Activated B cell treated with CpG ODN at 0.5 μM for 24 hours (primary cell): ENCODE measurements at regions of chr1 and their contacts with region 1.

Region 1: DNA sequence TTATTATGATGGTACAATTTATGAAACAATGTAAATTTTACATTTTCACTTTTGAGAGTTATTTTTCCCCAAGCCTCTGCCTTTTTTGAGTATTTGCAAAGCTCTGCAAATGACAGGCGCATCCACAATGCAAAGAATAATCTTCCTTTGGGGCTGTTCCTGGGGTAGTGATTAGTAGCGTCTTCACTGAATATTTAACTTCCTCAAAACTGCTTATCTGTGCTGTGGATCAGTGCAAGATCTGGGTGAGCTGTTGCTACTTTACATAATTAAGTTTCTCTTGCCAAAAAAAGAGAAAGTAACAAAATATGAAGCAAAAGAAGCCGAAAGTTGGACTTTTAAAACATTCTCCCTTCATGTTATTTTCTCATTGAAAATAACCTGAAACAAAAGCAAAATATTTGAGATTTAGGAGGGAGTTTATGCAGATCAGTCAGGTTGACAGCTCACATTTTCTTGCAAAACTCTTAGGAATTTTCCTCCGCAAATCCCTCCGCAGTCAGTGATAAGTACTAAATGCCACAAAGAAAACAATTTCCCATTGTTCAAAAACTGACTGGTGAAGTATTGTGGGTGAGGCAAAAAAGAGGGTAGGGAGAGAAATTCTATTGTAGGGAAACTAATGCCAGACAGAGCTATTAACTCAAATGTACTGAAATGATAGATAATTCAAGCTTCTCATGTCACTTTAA is 276.4 kb upstream of the B3GALT2 start:
- DNase-seq: no peak
- ATAC-seq: peak; percentile 78
- H3K4me3 Mint-ChIP-seq: peak overlapping the region; percentile 46
- H3K27ac Mint-ChIP-seq: no peak overlapping the region
- H3K4me1 Mint-ChIP-seq: peaks cover 12% of the 10 kb centered on the region
- H3K27me3 Mint-ChIP-seq: no peaks in the 10 kb centered on the region
- CTCF ChIP-seq: no peak

Region 2: GRCh38 chr1:193479187-193479586 is 16.4 kb after region 1 on chr1:
- CTCF ChIA-PET with region 1: no interaction called
- POLR2A ChIA-PET with region 1: no interaction called
- intact Hi-C with region 1: loop called (anchors 1 kb)
- DNase-seq: peak; percentile 19
- ATAC-seq: peak; percentile 91
- H3K4me3 Mint-ChIP-seq: peak overlapping the region; percentile 35
- H3K27ac Mint-ChIP-seq: peak overlapping the region; percentile 81
- H3K4me1 Mint-ChIP-seq: peaks cover 47% of the 10 kb centered on the region
- H3K27me3 Mint-ChIP-seq: no peaks in the 10 kb centered on the region
- CTCF ChIP-seq: no peak

Region 3: GRCh38 chr1:193498088-193498655 is 35.4 kb after region 1 on chr1:
- CTCF ChIA-PET with region 1: no interaction called
- POLR2A ChIA-PET with region 1: no interaction called
- intact Hi-C with region 1: no loop called
- DNase-seq: no peak
- ATAC-seq: no peak
- H3K4me3 Mint-ChIP-seq: no peak overlapping the region
- H3K27ac Mint-ChIP-seq: no peak overlapping the region
- H3K4me1 Mint-ChIP-seq: no peaks in the 10 kb centered on the region
- H3K27me3 Mint-ChIP-seq: peaks cover 6% of the 10 kb centered on the region
- CTCF ChIP-seq: no peak

Region 4: DNA sequence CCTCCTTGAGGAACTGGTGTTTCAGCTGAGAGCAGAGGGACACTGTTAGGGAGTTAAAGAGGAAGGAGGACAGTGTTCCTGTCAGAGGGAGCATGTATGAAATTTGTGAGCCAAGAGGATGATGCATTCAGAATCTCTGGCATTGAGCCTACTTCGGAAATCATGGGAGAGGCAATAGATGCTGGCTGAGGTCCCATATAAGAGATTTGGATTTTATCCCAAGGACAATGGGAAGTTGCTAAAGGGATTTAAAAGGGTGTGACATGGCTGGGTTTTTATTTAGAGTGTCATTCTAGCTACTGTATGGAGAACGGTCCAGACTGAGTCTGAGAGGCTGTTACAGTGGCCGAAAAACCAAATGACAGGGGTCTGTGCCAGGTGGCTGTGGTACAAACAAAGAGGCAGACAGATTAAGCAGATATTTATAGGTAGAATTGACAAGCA is 126.8 kb after region 1 on chr1:
- CTCF ChIA-PET with region 1: no interaction called
- POLR2A ChIA-PET with region 1: no interaction called
- intact Hi-C with region 1: no loop called
- DNase-seq: no peak
- ATAC-seq: no peak
- H3K4me3 Mint-ChIP-seq: no peak overlapping the region
- H3K27ac Mint-ChIP-seq: no peak overlapping the region
- H3K4me1 Mint-ChIP-seq: peaks cover 15% of the 10 kb centered on the region
- H3K27me3 Mint-ChIP-seq: no peaks in the 10 kb centered on the region
- CTCF ChIP-seq: no peak